Activated CD4-positive, alpha-beta T cell treated with anti-CD3 and anti-CD28 coated beads for 36 hours (primary cell): ENCODE measurements at regions of chr7 and their contacts with region 1.

Region 1: DNA sequence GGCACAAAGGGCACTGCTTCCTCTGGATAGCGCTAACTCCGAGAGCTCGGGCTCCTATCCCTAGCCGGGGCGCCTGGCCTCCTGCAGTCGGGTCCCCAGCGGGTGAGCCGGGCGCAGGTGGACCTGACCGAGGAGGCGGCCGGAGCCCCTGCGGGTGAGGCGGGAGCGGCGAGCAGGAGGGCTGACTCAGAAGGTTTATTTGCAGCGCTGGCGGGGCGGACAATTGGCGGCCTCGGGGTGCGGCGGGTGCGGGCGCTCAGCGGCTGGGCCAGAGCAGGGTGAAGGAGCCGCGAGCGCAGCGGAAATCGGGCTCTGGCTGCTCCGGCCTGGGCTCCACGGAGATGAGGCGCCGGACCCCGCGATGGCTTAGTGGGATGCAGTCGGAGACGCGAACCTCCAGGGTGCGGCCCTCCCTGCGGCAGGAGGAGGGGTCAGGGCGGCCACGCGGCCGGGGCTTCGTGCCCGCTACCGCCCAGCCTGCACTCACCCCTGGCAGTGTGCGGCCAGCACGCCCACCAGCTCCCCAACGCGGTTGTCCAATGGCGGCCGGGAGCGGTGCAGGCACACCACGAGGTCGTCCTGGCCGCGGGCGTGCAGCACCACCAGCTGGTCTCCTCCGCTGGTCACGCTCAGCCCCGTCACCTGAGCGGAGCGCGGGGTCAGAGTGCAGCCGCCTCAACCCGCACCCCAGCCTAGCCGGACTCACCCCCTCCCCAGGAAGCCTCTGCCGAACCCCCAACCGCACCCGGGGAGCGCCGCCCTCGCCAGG is 16.1 kb downstream of the MYO1G start:
- DNase-seq: peak; percentile 35
- ATAC-seq: no peak
- H3K4me3 Mint-ChIP-seq: no peak overlapping the region
- H3K27ac Mint-ChIP-seq: no peak overlapping the region
- H3K4me1 Mint-ChIP-seq: peaks cover 20% of the 10 kb centered on the region
- H3K27me3 Mint-ChIP-seq: no peaks in the 10 kb centered on the region

Region 2: DNA sequence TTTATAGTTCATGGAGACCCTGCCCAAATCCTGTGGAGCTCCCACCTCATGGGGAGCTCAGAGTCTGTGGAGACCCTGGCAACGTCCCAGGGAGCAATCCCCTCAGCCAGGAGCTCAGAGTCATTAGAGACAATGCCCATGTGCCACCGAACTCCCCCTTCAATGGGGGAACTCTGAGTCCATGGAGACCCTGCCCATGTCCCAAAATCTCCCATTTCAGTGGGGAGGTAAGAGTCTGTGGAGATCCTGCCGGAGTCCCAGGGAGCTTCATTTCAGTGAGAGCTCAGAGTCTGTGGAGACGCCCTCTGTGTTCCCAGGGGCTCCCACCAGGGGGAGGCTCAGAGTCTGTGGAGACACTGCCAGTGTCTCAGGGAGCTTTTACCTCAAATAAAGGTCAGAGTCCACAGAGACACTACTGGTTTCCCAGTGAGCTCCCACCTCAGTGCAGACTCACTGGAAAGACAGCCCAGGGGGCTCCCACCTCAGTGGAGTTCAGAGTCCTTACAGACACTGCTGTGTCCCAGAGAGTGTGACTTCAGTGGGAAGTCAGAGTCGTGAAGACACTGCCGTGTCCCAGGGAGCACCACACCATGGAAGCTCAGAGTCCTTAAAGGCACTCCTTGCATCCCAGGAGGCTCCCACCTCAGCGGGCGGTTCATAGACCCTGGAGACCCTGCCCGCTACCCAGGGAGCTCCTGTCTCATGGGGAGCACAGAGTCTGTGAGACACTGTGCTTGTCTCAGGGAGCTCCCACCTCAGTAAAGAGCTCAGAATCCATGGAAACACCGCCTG is 11.1 kb after region 1 on chr7:
- CTCF ChIA-PET with region 1: interaction called, 9 read pairs
- POLR2A ChIA-PET with region 1: interaction called, 11 read pairs
- intact Hi-C with region 1: no loop called
- DNase-seq: peak; percentile 74
- ATAC-seq: no peak
- H3K4me3 Mint-ChIP-seq: no peak overlapping the region
- H3K27ac Mint-ChIP-seq: peak overlapping the region; percentile 42
- H3K4me1 Mint-ChIP-seq: peaks cover 49% of the 10 kb centered on the region
- H3K27me3 Mint-ChIP-seq: no peaks in the 10 kb centered on the region